ENCODE measurements at regions of chr5 and their contacts with region 1.

Region 1: DNA sequence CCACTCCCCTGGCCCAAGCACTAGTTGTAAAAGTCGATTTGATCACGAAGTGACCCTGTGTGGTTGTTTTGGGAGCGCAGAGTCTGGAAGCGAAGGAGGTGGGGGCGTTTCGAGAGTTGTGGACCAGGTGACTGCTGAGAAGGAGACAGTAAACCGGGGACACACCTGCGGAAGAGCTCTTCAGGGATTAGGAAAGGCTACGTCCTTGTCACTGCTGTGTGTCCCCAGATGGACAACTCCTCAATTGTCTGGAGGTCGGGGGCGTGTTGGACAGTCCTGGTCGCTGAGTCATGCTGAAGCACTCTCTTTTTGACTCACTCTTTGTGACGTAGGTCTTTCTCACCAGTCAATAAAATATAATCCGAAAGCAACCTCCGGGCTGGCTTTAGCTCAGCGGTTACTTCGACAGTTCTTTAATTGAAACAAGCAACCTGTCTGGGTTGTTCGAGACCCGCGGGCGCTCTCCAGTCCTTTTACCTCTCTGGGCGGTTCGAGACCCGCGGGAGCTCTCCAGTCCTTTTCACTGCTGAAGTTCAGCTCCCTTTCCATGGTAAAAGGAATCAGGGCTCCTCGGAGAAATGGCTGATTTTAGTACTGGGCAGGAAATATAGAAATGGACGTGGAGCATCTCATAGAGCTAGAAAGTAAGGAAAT is 10.8 kb downstream of the ZMAT2 start:
- DNase-seq: peak; percentile 96 to 97
- H3K4me3 ChIP-seq: peak overlapping the region; percentile 46
- H3K4me3 Mint-ChIP-seq: peak overlapping the region; percentile 93
- H3K27ac Mint-ChIP-seq: peak overlapping the region; percentile 98
- H3K4me1 ChIP-seq: no peaks in the 10 kb centered on the region
- H3K4me1 Mint-ChIP-seq: peaks cover 7% of the 10 kb centered on the region
- H3K27me3 ChIP-seq: no peaks in the 10 kb centered on the region
- H3K27me3 Mint-ChIP-seq: peaks cover 4% of the 10 kb centered on the region
- CTCF ChIP-seq: no peak

Region 2: GRCh38 chr5:140690941-140691924 is 19.8 kb before region 1 on chr5 and contains the starts of genes HARS1 and HARS2:
- CTCF ChIA-PET with region 1: interaction called, 7 read pairs
- POLR2A ChIA-PET with region 1: interaction called, 23 read pairs
- intact Hi-C with region 1: no loop called
- DNase-seq: peak; percentile 94 to 96
- H3K4me3 ChIP-seq: peak within 1 kb of the TSS; percentile 96
- H3K4me3 Mint-ChIP-seq: peak within 1 kb of the TSS; percentile 94
- H3K27ac Mint-ChIP-seq: peak within 1 kb of the TSS; percentile 89
- H3K4me1 ChIP-seq: peaks cover 16% of the 10 kb centered on the region; the same call in 1 of the 2 replicates
- H3K4me1 Mint-ChIP-seq: no peaks in the 10 kb centered on the region
- H3K27me3 ChIP-seq: no peaks in the 10 kb centered on the region
- H3K27me3 Mint-ChIP-seq: no peaks in the 10 kb centered on the region
- CTCF ChIP-seq: no peak
- total RNA-seq, gene HARS1: 82.4 and 83.5 TPM in 2 replicates
- total RNA-seq, gene HARS2: 36.5 and 38.6 TPM in 2 replicates

Region 3: GRCh38 chr5:140700177-140701144 is 10.6 kb before region 1 on chr5 and contains the start of gene ZMAT2:
- CTCF ChIA-PET with region 1: interaction called, 14 read pairs
- POLR2A ChIA-PET with region 1: interaction called, 26 read pairs
- intact Hi-C with region 1: loop called (anchors 1 kb)
- DNase-seq: peak; percentile 94 to 96
- H3K4me3 ChIP-seq: peak within 1 kb of the TSS; percentile 67
- H3K4me3 Mint-ChIP-seq: peak within 1 kb of the TSS; percentile 85
- H3K27ac Mint-ChIP-seq: peak within 1 kb of the TSS; percentile 92
- H3K4me1 ChIP-seq: no peaks in the 10 kb centered on the region; the same call in 1 of the 2 replicates
- H3K4me1 Mint-ChIP-seq: no peaks in the 10 kb centered on the region
- H3K27me3 ChIP-seq: no peaks in the 10 kb centered on the region
- H3K27me3 Mint-ChIP-seq: no peaks in the 10 kb centered on the region
- CTCF ChIP-seq: no peak
- total RNA-seq, gene ZMAT2: 73.1 and 76.6 TPM in 2 replicates